CD8-positive, alpha-beta memory T cell (primary cell): ENCODE measurements at regions of chr20 and their contacts with region 1.

Region 1: GRCh38 chr20:57596998-57597939 is 23.0 kb downstream of the ZBP1 start:
- DNase-seq: peak; percentile 68 to 80 (median 74)
- H3K4me3 ChIP-seq: peak overlapping the region; percentile 34
- H3K4me3 Mint-ChIP-seq: peak overlapping the region in 2 of 7 donors; percentile 8 to 11
- H3K27ac ChIP-seq: no peak overlapping the region
- H3K27ac Mint-ChIP-seq: peak overlapping the region in 1 of 8 donors; percentile 35
- H3K4me1 ChIP-seq: peaks cover 7% of the 10 kb centered on the region
- H3K4me1 Mint-ChIP-seq: peaks cover 0 to 26% (median 5%) of the 10 kb centered on the region in 3 donors
- H3K27me3 ChIP-seq: no peaks in the 10 kb centered on the region
- H3K27me3 Mint-ChIP-seq: peaks cover 0 to 10% of the 10 kb centered on the region in 2 donors

Region 2: DNA sequence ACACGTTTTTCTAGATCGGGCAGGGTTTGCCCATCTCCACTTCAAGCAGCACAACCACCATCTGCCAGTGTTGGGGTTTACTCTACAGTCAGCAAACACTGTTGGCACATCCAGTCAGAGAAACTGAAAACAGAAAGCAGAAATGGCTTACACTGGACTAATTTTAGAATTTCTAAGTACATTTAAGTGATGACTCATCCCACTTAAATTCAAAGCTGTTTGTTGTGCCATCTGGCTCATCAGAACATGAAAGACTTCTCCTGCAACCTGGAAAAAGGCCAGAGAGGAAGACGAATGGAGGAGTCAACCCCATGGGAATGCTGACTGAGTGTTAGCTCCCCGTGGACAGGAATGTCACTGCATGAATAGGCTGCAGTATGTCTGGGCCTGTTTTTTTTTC is 1042.4 kb before region 1 on chr20:
- CTCF ChIA-PET with region 1: interaction called, 19 read pairs
- POLR2A ChIA-PET with region 1: no interaction called
- DNase-seq: no peak
- H3K4me3 ChIP-seq: no peak overlapping the region
- H3K4me3 Mint-ChIP-seq: no peak overlapping the region
- H3K27ac ChIP-seq: no peak overlapping the region
- H3K27ac Mint-ChIP-seq: no peak overlapping the region
- H3K4me1 ChIP-seq: no peaks in the 10 kb centered on the region
- H3K4me1 Mint-ChIP-seq: no peaks in the 10 kb centered on the region
- H3K27me3 ChIP-seq: no peaks in the 10 kb centered on the region
- H3K27me3 Mint-ChIP-seq: peaks cover 0 to 3% of the 10 kb centered on the region in 2 donors

Region 3: GRCh38 chr20:57622579-57623377 is 25.5 kb after region 1 on chr20:
- CTCF ChIA-PET with region 1: interaction called, 92 read pairs
- POLR2A ChIA-PET with region 1: interaction called, 3 read pairs
- DNase-seq: peak; percentile 48 to 79 (median 55)
- H3K4me3 ChIP-seq: no peak overlapping the region
- H3K4me3 Mint-ChIP-seq: peak overlapping the region in 5 of 7 donors; percentile 26 to 81 (median 69)
- H3K27ac ChIP-seq: no peak overlapping the region
- H3K27ac Mint-ChIP-seq: peak overlapping the region; percentile 46 to 94 (median 88)
- H3K4me1 ChIP-seq: peaks cover 72% of the 10 kb centered on the region
- H3K4me1 Mint-ChIP-seq: peaks cover 63 to 79% (median 75%) of the 10 kb centered on the region in 3 donors
- H3K27me3 ChIP-seq: no peaks in the 10 kb centered on the region
- H3K27me3 Mint-ChIP-seq: peaks cover 0 to 3% of the 10 kb centered on the region in 2 donors

Region 4: DNA sequence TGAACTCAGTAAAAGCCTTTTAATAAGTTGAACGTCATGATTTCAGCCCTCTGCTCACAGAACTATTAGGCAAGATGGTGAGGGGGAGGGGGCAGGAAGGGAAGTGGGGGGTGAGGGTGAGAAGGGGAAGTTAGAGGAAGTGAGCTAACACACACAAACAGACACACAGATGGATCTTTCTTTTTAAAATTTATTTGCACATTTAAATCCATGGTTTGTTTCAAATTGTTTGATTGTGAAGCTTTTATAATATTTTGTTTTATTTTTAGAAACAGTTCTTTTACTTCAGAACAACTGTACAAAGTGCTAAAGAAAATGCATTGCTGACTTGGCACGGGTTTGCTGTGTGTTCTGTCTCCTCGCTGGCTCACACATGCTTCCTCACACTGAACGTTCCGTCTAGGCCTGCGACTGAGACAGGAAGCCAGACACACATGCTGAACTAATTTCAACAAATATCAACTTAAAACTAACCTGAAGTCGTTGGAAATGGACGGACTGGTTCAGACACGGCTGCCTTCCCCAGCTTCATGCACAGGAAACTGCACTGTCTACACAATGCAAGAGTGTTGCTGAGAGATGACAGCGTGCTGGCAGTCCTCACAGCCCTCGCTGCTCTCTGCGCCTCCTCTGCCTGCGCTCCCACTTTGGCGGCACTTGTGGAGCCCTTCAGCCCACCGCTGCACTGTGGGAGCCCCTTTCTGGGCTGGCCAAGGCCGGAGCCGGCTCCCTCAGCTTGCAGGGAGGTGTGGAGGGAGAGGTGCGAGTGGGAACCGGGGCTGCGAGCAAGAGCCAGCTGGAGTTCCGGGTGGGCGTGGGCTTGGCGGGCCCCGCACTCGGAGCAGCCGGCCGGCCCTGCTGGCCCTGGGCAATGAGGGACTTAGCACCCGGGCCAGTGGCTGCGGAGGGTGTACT is 31.0 kb after region 1 on chr20:
- CTCF ChIA-PET with region 1: interaction called, 92 read pairs
- POLR2A ChIA-PET with region 1: no interaction called
- DNase-seq: peak; percentile 42 to 80 (median 68)
- H3K4me3 ChIP-seq: peak overlapping the region; percentile 66
- H3K4me3 Mint-ChIP-seq: peak overlapping the region; percentile 61 to 96 (median 86)
- H3K27ac ChIP-seq: peak overlapping the region; percentile 68
- H3K27ac Mint-ChIP-seq: peak overlapping the region; percentile 93 to 100 (median 98)
- H3K4me1 ChIP-seq: peaks cover 54% of the 10 kb centered on the region
- H3K4me1 Mint-ChIP-seq: peaks cover 53 to 78% (median 78%) of the 10 kb centered on the region in 3 donors
- H3K27me3 ChIP-seq: no peaks in the 10 kb centered on the region
- H3K27me3 Mint-ChIP-seq: peaks cover 0 to 9% of the 10 kb centered on the region in 2 donors

Region 5: DNA sequence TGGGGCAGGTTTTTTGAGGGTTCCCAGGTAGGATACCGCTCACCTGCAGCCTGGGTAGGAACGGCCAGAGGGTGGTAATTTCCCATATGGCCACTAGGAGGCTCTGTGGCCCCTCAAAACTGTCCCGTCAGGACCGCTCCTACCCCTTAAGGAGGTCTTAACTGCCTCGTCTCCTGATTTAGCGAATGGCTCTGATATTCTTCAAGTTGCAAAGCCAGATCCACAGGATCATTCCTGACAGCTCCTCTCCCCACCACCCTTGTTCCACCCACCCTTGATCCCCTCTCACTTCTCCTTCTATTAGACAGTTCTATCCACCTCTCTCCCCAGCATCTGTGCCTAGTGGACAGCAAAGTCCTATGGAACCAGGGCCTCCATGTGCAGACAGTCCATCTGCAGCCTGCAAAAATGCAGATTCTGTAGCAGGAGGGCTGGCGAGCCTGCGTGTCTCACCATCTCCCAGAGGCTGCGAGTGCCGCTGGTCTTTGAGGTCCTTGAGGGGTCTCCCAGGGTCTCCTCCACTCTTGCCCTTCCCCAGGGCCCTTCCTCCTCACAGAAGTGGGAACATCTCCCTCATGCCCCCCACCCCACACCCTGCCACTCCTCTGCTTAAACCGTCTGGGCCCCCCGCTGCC is 57.2 kb after region 1 on chr20:
- CTCF ChIA-PET with region 1: interaction called, 11 read pairs
- POLR2A ChIA-PET with region 1: no interaction called
- DNase-seq: peak; percentile 37 to 74 (median 47)
- H3K4me3 ChIP-seq: no peak overlapping the region
- H3K4me3 Mint-ChIP-seq: no peak overlapping the region
- H3K27ac ChIP-seq: no peak overlapping the region
- H3K27ac Mint-ChIP-seq: peak overlapping the region in 3 of 8 donors; percentile 66 to 77 (median 77)
- H3K4me1 ChIP-seq: peaks cover 22% of the 10 kb centered on the region
- H3K4me1 Mint-ChIP-seq: peaks cover 15 to 41% (median 20%) of the 10 kb centered on the region in 3 donors
- H3K27me3 ChIP-seq: no peaks in the 10 kb centered on the region
- H3K27me3 Mint-ChIP-seq: peaks cover 0 to 4% of the 10 kb centered on the region in 2 donors

Region 6: GRCh38 chr20:57800791-57801430 is 203.6 kb after region 1 on chr20:
- CTCF ChIA-PET with region 1: no interaction called
- POLR2A ChIA-PET with region 1: no interaction called
- DNase-seq: no peak
- H3K4me3 ChIP-seq: no peak overlapping the region
- H3K4me3 Mint-ChIP-seq: no peak overlapping the region
- H3K27ac ChIP-seq: no peak overlapping the region
- H3K27ac Mint-ChIP-seq: no peak overlapping the region
- H3K4me1 ChIP-seq: no peaks in the 10 kb centered on the region
- H3K4me1 Mint-ChIP-seq: no peaks in the 10 kb centered on the region
- H3K27me3 ChIP-seq: no peaks in the 10 kb centered on the region
- H3K27me3 Mint-ChIP-seq: peaks cover 0 to 10% of the 10 kb centered on the region in 2 donors

Region 7: GRCh38 chr20:58179432-58180099 is 582.3 kb after region 1 on chr20:
- CTCF ChIA-PET with region 1: interaction called, 20 read pairs
- POLR2A ChIA-PET with region 1: no interaction called
- DNase-seq: peak; percentile 43 to 72 (median 52)
- H3K4me3 ChIP-seq: peak overlapping the region; percentile 47
- H3K4me3 Mint-ChIP-seq: peak overlapping the region in 5 of 7 donors; percentile 26 to 68 (median 53)
- H3K27ac ChIP-seq: no peak overlapping the region
- H3K27ac Mint-ChIP-seq: peak overlapping the region in 1 of 8 donors; percentile 48
- H3K4me1 ChIP-seq: peaks cover 9% of the 10 kb centered on the region
- H3K4me1 Mint-ChIP-seq: peaks cover 3 to 17% (median 5%) of the 10 kb centered on the region in 3 donors
- H3K27me3 ChIP-seq: peaks cover 12% of the 10 kb centered on the region
- H3K27me3 Mint-ChIP-seq: peaks cover 18 to 43% of the 10 kb centered on the region in 2 donors

Region 8: GRCh38 chr20:58209652-58210397 is 612.6 kb after region 1 on chr20:
- CTCF ChIA-PET with region 1: interaction called, 18 read pairs
- POLR2A ChIA-PET with region 1: no interaction called
- DNase-seq: peak; percentile 73 to 87 (median 81)
- H3K4me3 ChIP-seq: no peak overlapping the region
- H3K4me3 Mint-ChIP-seq: peak overlapping the region in 3 of 7 donors; percentile 6 to 9 (median 8)
- H3K27ac ChIP-seq: no peak overlapping the region
- H3K27ac Mint-ChIP-seq: peak overlapping the region; percentile 3 to 81 (median 56)
- H3K4me1 ChIP-seq: no peaks in the 10 kb centered on the region
- H3K4me1 Mint-ChIP-seq: peaks cover 0 to 7% (median 4%) of the 10 kb centered on the region in 3 donors
- H3K27me3 ChIP-seq: peaks cover 7% of the 10 kb centered on the region
- H3K27me3 Mint-ChIP-seq: peaks cover 7 to 19% of the 10 kb centered on the region in 2 donors